CD4-positive, alpha-beta T cell (primary cell): ENCODE measurements at regions of chr3 and their contacts with region 1.

Region 1: GRCh38 chr3:38136777-38137614 is at the start of gene ACAA1:
- DNase-seq: peak; percentile 91 to 99 (median 96)
- ATAC-seq: peak; percentile 84
- H3K4me3 ChIP-seq: peak within 1 kb of the TSS; percentile 95
- H3K4me3 Mint-ChIP-seq: peak within 1 kb of the TSS; percentile 99
- H3K27ac ChIP-seq: peak within 1 kb of the TSS; percentile 80 to 83
- H3K27ac Mint-ChIP-seq: peak within 1 kb of the TSS; percentile 92
- H3K4me1 ChIP-seq: peaks cover 76% of the 10 kb centered on the region
- H3K4me1 Mint-ChIP-seq: peaks cover 77% of the 10 kb centered on the region
- H3K27me3 ChIP-seq: no peaks in the 10 kb centered on the region
- H3K27me3 Mint-ChIP-seq: no peaks in the 10 kb centered on the region
- CTCF ChIP-seq: no peak
- total RNA-seq, gene ACAA1: 56.4 to 58.9 TPM

Region 2: GRCh38 chr3:38164966-38165680 is 28.1 kb after region 1 on chr3 and contains the start of gene OXSR1:
- CTCF ChIA-PET with region 1: interaction called, 13 read pairs
- POLR2A ChIA-PET with region 1: interaction called, 208 read pairs
- intact Hi-C with region 1: loop called (anchors 1 kb)
- DNase-seq: peak; percentile 91 to 100 (median 95)
- ATAC-seq: peak; percentile 89
- H3K4me3 ChIP-seq: peak within 1 kb of the TSS; percentile 80
- H3K4me3 Mint-ChIP-seq: peak within 1 kb of the TSS; percentile 91
- H3K27ac ChIP-seq: peak within 1 kb of the TSS; percentile 98 to 100
- H3K27ac Mint-ChIP-seq: peak within 1 kb of the TSS; percentile 99
- H3K4me1 ChIP-seq: peaks cover 37% of the 10 kb centered on the region
- H3K4me1 Mint-ChIP-seq: peaks cover 52% of the 10 kb centered on the region
- H3K27me3 ChIP-seq: no peaks in the 10 kb centered on the region
- H3K27me3 Mint-ChIP-seq: no peaks in the 10 kb centered on the region
- CTCF ChIP-seq: no peak
- total RNA-seq, gene OXSR1: 28.3 to 30.3 TPM

Region 3: GRCh38 chr3:38173834-38174418 is 36.9 kb after region 1 on chr3:
- CTCF ChIA-PET with region 1: no interaction called
- POLR2A ChIA-PET with region 1: interaction called, 10 read pairs
- intact Hi-C with region 1: no loop called
- DNase-seq: peak in 1 of 14 experiments; percentile 37
- ATAC-seq: no peak
- H3K4me3 ChIP-seq: no peak overlapping the region
- H3K4me3 Mint-ChIP-seq: peak overlapping the region; percentile 1
- H3K27ac ChIP-seq: no peak overlapping the region
- H3K27ac Mint-ChIP-seq: peak overlapping the region; percentile 4
- H3K4me1 ChIP-seq: peaks cover 21% of the 10 kb centered on the region
- H3K4me1 Mint-ChIP-seq: peaks cover 66% of the 10 kb centered on the region
- H3K27me3 ChIP-seq: no peaks in the 10 kb centered on the region
- H3K27me3 Mint-ChIP-seq: no peaks in the 10 kb centered on the region
- CTCF ChIP-seq: no peak

Region 4: GRCh38 chr3:38210141-38210757 is 73.3 kb after region 1 on chr3:
- CTCF ChIA-PET with region 1: no interaction called
- POLR2A ChIA-PET with region 1: no interaction called
- intact Hi-C with region 1: loop called in 1 of 2 experiments (anchors 10 kb)
- DNase-seq: peak in 3 of 14 experiments; percentile 4 to 43 (median 18)
- ATAC-seq: no peak
- H3K4me3 ChIP-seq: no peak overlapping the region
- H3K4me3 Mint-ChIP-seq: no peak overlapping the region
- H3K27ac ChIP-seq: no peak overlapping the region
- H3K27ac Mint-ChIP-seq: no peak overlapping the region
- H3K4me1 ChIP-seq: peaks cover 3% of the 10 kb centered on the region
- H3K4me1 Mint-ChIP-seq: peaks cover 75% of the 10 kb centered on the region
- H3K27me3 ChIP-seq: no peaks in the 10 kb centered on the region
- H3K27me3 Mint-ChIP-seq: no peaks in the 10 kb centered on the region
- CTCF ChIP-seq: no peak

Region 5: DNA sequence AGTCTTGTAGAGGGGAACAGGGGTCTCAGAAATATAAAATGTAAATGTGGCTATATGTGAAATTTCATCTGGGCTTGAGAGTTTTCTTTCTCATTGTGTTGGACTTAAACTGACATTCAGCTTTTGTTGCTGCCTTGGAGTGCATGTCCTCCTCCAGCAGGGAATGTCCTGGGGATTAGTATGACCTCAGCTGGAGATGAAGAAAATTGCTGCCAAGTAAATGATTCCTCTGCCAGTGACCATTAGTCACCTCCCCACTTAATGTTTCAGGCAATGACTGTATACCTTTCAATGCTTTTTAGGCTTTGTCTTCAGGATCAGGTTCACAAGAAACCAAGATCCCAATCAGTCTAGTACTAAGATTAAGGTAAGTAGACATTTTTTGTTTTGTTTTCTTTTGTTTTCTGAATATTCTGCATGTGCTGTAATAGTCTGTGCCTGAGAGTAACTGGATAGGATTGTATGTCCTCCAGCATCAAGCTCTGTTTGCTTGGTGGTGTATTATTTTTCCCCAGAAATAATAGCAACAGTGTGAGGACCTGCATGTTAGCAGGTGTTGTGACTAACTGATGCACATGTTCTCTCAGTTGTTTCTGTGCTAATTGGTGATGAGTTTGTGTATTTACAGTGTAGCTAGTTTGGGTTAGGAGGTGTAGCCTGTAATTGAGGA is 110.5 kb after region 1 on chr3:
- CTCF ChIA-PET with region 1: no interaction called
- POLR2A ChIA-PET with region 1: no interaction called
- intact Hi-C with region 1: loop called in 1 of 2 experiments (anchors 5 kb)
- DNase-seq: no peak
- ATAC-seq: no peak
- H3K4me3 ChIP-seq: no peak overlapping the region
- H3K4me3 Mint-ChIP-seq: no peak overlapping the region
- H3K27ac ChIP-seq: no peak overlapping the region
- H3K27ac Mint-ChIP-seq: no peak overlapping the region
- H3K4me1 ChIP-seq: no peaks in the 10 kb centered on the region
- H3K4me1 Mint-ChIP-seq: no peaks in the 10 kb centered on the region
- H3K27me3 ChIP-seq: no peaks in the 10 kb centered on the region
- H3K27me3 Mint-ChIP-seq: no peaks in the 10 kb centered on the region
- CTCF ChIP-seq: no peak